Activated CD4-positive, alpha-beta memory T cell treated with anti-CD3 and anti-CD28 coated beads, Interleukin-2, amount 10 ng/mL, durations not matched to agents 7 days and 5 days (primary cell): ENCODE measurements at regions of chr15 and their contacts with region 1.

Region 1: DNA sequence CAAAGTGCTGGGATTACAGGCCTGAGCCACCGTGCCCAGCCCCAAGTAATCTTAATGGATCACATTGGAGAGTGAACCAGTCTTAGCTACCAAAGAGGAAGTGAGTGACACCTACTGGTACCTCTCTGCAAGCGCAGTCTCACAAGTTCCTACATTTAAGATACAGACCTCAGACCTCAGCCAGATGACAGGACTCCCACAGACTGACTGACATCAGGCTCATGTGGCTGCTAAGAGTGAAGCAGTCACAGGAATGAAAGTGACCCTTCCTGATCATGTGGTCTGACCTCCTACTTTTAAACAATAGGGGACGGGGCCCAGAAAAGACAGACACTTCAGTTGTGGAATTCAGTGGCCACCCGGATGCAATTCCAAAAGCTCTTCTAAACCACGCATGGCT is 36.3 kb upstream of the GNB5 start:
- DNase-seq: peak; percentile 77
- H3K4me3 Mint-ChIP-seq: no peak overlapping the region
- H3K27ac Mint-ChIP-seq: no peak overlapping the region
- H3K4me1 Mint-ChIP-seq: peaks cover 18% of the 10 kb centered on the region
- H3K27me3 Mint-ChIP-seq: no peaks in the 10 kb centered on the region

Region 2: GRCh38 chr15:51861557-51862359 is 365.7 kb before region 1 on chr15:
- CTCF ChIA-PET with region 1: no interaction called
- POLR2A ChIA-PET with region 1: no interaction called
- DNase-seq: peak; percentile 83
- H3K4me3 Mint-ChIP-seq: peak overlapping the region; percentile 57
- H3K27ac Mint-ChIP-seq: peak overlapping the region; percentile 68
- H3K4me1 Mint-ChIP-seq: peaks cover 49% of the 10 kb centered on the region
- H3K27me3 Mint-ChIP-seq: no peaks in the 10 kb centered on the region

Region 3: DNA sequence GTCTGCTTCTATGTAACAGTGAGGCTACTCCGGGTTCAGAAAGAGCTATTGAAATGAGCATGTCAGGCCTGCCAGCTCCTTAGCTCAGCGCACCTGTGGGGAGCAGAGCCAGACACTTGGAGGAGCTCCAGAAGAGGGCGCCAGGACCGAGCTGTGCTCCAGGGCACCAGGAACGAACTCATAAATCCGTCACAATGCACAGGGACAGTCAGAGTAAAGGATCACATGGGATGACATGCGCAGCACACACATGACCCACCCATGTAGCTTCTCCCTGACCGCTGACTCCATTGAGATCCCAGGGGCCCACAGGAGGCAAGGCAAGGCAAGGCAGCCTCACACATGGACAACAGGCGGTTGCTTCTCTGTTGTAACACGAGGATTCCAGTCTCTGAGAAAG is 10.3 kb before region 1 on chr15:
- CTCF ChIA-PET with region 1: interaction called, 31 read pairs
- POLR2A ChIA-PET with region 1: interaction called, 3 read pairs
- DNase-seq: peak; percentile 46
- H3K4me3 Mint-ChIP-seq: no peak overlapping the region
- H3K27ac Mint-ChIP-seq: no peak overlapping the region
- H3K4me1 Mint-ChIP-seq: peaks cover 25% of the 10 kb centered on the region
- H3K27me3 Mint-ChIP-seq: no peaks in the 10 kb centered on the region

Region 4: GRCh38 chr15:52349052-52349700 is 121.7 kb after region 1 on chr15:
- CTCF ChIA-PET with region 1: no interaction called
- POLR2A ChIA-PET with region 1: no interaction called
- DNase-seq: no peak
- H3K4me3 Mint-ChIP-seq: no peak overlapping the region
- H3K27ac Mint-ChIP-seq: no peak overlapping the region
- H3K4me1 Mint-ChIP-seq: peaks cover 7% of the 10 kb centered on the region
- H3K27me3 Mint-ChIP-seq: no peaks in the 10 kb centered on the region